ENCODE measurements at regions of chr19 and their contacts with region 1.

Region 1: GRCh38 chr19:46766569-46767317 is 20.5 kb upstream of the STRN4 start:
- DNase-seq: peak; percentile 62
- ATAC-seq: peak; percentile 19

Region 2: GRCh38 chr19:46529622-46530462 is 236.9 kb before region 1 on chr19:
- intact Hi-C with region 1: no loop called
- DNase-seq: peak; percentile 79
- ATAC-seq: peak; percentile 78

Region 3: DNA sequence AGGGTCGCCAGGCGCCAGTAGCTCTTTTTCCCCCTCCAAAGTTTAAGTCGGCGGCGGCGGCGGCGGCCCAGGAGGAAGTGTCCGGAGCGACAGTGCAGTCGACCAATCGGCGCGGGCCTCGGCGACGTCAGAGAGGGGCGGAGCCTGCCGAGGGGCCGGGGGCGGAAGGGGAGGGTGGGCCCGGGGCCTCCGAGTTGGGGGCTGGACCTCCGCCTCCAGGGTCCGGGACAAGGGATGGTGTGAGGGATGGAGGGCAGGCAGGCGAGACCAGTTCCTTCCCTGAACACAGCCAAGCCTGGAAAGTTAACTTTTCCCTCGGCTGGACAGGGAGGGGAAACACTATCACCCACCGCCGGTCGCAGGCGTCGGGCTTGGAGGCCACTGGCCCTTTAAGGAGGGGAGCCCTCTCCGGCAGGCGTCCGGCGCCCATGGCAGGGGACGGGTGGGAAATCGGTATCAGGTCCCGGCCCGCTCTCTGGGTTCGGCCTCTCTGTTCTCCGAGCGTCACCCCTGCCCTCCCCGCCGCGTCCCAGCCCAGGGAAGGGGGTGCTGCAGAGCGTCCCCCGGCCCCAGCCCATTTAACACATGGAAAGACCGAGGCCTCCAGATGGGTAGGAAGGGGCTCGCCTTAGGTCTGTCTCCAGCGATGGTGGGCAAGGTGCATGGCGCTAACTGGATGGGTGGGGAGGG is 49.6 kb before region 1 on chr19 and contains the start of gene PRKD2:
- intact Hi-C with region 1: no loop called
- DNase-seq: peak; percentile 95
- ATAC-seq: peak; percentile 88
- total RNA-seq, gene PRKD2: 9.3 TPM

Region 4: GRCh38 chr19:46728693-46729676 is 37.8 kb before region 1 on chr19:
- intact Hi-C with region 1: no loop called
- DNase-seq: peak; percentile 88
- ATAC-seq: peak; percentile 75

Region 5: GRCh38 chr19:46821498-46822409 is 55.0 kb after region 1 on chr19:
- intact Hi-C with region 1: loop called (anchors 10 kb)
- DNase-seq: peak; percentile 54
- ATAC-seq: peak; percentile 59

Region 6: GRCh38 chr19:47172666-47173455 is 406.1 kb after region 1 on chr19:
- intact Hi-C with region 1: no loop called
- DNase-seq: no peak
- ATAC-seq: no peak